ENCODE measurements at regions of chr6 and their contacts with region 1.

Region 1: GRCh38 chr6:131758920-131759319 is 48.1 kb upstream of the CTAGE9 start:
- DNase-seq: no peak
- ATAC-seq: peak; percentile 67
- H3K4me3 ChIP-seq: no peak overlapping the region
- H3K27ac ChIP-seq: no peak overlapping the region
- H3K4me1 ChIP-seq: no peaks in the 10 kb centered on the region
- H3K27me3 ChIP-seq: no peaks in the 10 kb centered on the region

Region 2: DNA sequence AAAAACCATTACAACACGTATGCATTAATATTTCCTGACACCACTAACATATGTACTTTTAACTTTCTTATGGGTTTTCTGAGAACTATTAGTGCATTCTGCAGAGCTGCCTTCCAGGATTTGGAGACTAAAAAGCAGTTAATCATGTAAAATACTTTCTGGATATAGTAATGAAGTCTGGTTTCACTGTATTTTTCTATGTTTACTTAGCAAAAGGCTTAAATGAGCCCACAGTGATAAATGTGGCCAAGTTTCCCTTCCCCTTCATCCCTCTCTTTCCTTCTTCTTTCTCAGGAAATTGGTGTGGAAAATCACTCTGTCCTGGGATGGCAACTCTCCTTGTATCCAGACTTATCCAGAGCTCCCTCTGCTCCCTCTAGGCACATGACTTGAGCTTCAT is 19.2 kb after region 1 on chr6:
- intact Hi-C with region 1: loop called in 1 of 2 experiments (anchors 2 kb)
- DNase-seq: no peak
- ATAC-seq: peak; percentile 36
- H3K4me3 ChIP-seq: no peak overlapping the region
- H3K27ac ChIP-seq: peak overlapping the region; percentile 75 to 92
- H3K4me1 ChIP-seq: peaks cover 2 to 3% of the 10 kb centered on the region in 2 donors
- H3K27me3 ChIP-seq: no peaks in the 10 kb centered on the region

Measured in aorta (tissue), 5 donors.